A673 (cell line): ENCODE measurements at regions of chr12 and their contacts with region 1.

Region 1: DNA sequence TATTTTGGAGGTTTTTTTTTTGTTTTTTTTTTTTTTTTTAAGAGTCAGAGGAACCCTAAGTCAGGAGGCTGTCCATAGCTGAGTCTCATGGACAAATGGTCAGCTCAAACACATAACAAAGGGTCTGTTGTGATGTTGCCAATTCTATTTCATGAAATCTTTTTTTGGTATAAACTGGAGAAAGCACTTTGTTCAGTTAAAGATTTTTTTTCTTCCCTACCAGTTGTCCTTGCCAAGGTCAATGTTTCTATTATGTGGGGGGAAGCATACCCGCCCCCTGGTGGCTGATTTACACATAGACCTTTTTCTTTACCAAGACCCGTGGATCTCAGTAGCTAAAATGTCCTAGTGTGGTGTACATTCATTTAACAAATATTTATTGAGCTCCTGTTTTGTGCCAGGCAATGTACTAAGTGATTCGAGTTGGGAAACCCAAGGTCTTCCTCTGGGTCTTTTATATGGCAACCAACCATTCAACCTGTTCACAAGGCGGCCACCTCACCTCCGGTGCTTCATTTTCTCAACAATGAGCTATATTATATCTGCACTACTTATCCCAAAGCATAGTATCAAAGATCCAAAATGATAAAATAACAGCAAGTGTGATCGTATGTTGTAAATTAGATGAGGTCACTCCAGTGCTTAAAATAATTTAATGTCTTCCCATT is 214.5 kb downstream of the PAH start:
- DNase-seq: peak; percentile 69
- H3K4me3 ChIP-seq: no peak overlapping the region
- H3K27ac ChIP-seq: no peak overlapping the region
- H3K4me1 ChIP-seq: no peaks in the 10 kb centered on the region
- H3K27me3 ChIP-seq: peaks cover 5% of the 10 kb centered on the region
- CTCF ChIP-seq: peak; percentile 78

Region 2: GRCh38 chr12:101870925-101871324 is 831.7 kb before region 1 on chr12:
- CTCF ChIA-PET with region 1: no interaction called
- POLR2A ChIA-PET with region 1: interaction called, 11 read pairs
- intact Hi-C with region 1: no loop called
- DNase-seq: no peak
- H3K4me3 ChIP-seq: no peak overlapping the region
- H3K27ac ChIP-seq: no peak overlapping the region
- H3K4me1 ChIP-seq: peaks cover 8% of the 10 kb centered on the region
- H3K27me3 ChIP-seq: no peaks in the 10 kb centered on the region
- CTCF ChIP-seq: no peak

Region 3: GRCh38 chr12:102169922-102170621 is 532.5 kb before region 1 on chr12:
- CTCF ChIA-PET with region 1: interaction called, 5 read pairs
- POLR2A ChIA-PET with region 1: no interaction called
- intact Hi-C with region 1: loop called (anchors 10 kb)
- DNase-seq: peak; percentile 34
- H3K4me3 ChIP-seq: no peak overlapping the region
- H3K27ac ChIP-seq: no peak overlapping the region
- H3K4me1 ChIP-seq: no peaks in the 10 kb centered on the region
- H3K27me3 ChIP-seq: peaks cover 30% of the 10 kb centered on the region
- CTCF ChIP-seq: peak; percentile 79

Region 4: GRCh38 chr12:102659200-102659911 is 43.2 kb before region 1 on chr12:
- CTCF ChIA-PET with region 1: no interaction called
- POLR2A ChIA-PET with region 1: no interaction called
- intact Hi-C with region 1: loop called (anchors 2 kb)
- DNase-seq: peak; percentile 7
- H3K4me3 ChIP-seq: no peak overlapping the region
- H3K27ac ChIP-seq: no peak overlapping the region
- H3K4me1 ChIP-seq: no peaks in the 10 kb centered on the region
- H3K27me3 ChIP-seq: no peaks in the 10 kb centered on the region
- CTCF ChIP-seq: peak; percentile 50

Region 5: DNA sequence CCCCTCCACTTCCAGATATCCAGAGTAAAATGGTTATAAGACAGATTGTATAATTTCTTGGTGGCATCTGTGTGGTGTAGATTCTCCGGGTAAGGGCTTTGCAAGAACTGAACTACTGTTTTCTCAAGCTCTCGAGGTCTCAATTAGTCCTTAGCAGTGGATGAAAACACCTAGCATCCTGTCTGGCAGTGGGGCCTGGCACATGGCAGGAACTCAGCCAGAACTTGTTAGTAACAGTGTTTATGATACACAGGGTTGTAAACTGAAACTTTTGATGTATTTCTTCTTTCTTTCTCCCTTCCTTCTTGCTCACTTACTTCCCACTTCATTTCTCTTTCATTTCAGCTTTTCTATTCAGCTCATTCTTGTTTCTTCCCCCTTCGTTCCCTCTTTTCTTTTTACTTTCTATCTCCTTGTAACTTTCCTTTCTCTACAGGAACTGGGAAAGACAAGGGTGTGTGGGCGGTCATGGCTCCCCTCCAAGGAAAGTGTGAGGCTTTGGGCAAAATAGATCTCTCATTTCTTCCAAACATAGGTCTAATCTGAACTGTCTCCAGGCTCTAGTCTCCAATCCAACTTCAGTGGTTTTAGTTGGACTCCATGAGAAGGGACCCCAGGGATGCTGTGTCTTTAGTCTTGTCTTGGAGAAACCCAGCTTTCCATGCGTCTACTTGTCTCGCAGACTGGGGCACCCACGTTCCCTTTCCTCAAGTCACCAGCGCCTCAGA is 54.7 kb after region 1 on chr12:
- CTCF ChIA-PET with region 1: no interaction called
- POLR2A ChIA-PET with region 1: no interaction called
- intact Hi-C with region 1: no loop called
- DNase-seq: no peak
- H3K4me3 ChIP-seq: no peak overlapping the region
- H3K27ac ChIP-seq: no peak overlapping the region
- H3K4me1 ChIP-seq: no peaks in the 10 kb centered on the region
- H3K27me3 ChIP-seq: no peaks in the 10 kb centered on the region
- CTCF ChIP-seq: no peak